ENCODE measurements at regions of chr15 and their contacts with region 1.

Region 1: GRCh38 chr15:71800835-71801745 is 9.3 kb upstream of the NR2E3 start:
- DNase-seq: peak; percentile 78
- H3K4me3 Mint-ChIP-seq: no peak overlapping the region
- H3K27ac Mint-ChIP-seq: peak overlapping the region; percentile 1
- H3K4me1 Mint-ChIP-seq: peaks cover 34% of the 10 kb centered on the region
- H3K27me3 Mint-ChIP-seq: no peaks in the 10 kb centered on the region
- CTCF ChIP-seq: peak; percentile 83

Region 2: GRCh38 chr15:70974004-70974832 is 826.9 kb before region 1 on chr15:
- CTCF ChIA-PET with region 1: no interaction called
- intact Hi-C with region 1: loop called (anchors 2 kb)
- DNase-seq: peak; percentile 3
- H3K4me3 Mint-ChIP-seq: no peak overlapping the region
- H3K27ac Mint-ChIP-seq: no peak overlapping the region
- H3K4me1 Mint-ChIP-seq: no peaks in the 10 kb centered on the region
- H3K27me3 Mint-ChIP-seq: no peaks in the 10 kb centered on the region
- CTCF ChIP-seq: peak; percentile 55

Region 3: DNA sequence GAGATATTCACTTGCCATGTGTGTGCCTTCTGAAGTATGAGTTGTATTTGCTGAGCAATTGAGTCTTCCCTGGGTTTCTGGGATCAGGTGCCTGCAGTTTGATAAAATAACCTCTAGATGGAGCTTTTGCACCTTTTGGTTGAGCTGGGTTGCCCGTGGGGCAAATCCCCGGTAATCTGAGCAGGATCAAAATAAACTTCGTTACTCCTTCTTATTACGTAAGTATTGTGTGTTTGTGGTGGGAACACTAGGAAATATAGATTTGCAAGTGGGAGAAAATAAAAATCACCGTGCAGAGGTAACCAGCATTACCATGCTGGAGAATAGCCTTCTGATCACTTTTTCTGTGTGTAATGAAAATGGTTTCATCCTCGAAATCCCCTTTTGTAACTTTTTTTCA is 268.1 kb before region 1 on chr15:
- CTCF ChIA-PET with region 1: interaction called, 3 read pairs
- intact Hi-C with region 1: loop called (anchors 2 kb)
- DNase-seq: peak; percentile 52
- H3K4me3 Mint-ChIP-seq: no peak overlapping the region
- H3K27ac Mint-ChIP-seq: no peak overlapping the region
- H3K4me1 Mint-ChIP-seq: peaks cover 30% of the 10 kb centered on the region
- H3K27me3 Mint-ChIP-seq: no peaks in the 10 kb centered on the region
- CTCF ChIP-seq: peak; percentile 80

Region 4: DNA sequence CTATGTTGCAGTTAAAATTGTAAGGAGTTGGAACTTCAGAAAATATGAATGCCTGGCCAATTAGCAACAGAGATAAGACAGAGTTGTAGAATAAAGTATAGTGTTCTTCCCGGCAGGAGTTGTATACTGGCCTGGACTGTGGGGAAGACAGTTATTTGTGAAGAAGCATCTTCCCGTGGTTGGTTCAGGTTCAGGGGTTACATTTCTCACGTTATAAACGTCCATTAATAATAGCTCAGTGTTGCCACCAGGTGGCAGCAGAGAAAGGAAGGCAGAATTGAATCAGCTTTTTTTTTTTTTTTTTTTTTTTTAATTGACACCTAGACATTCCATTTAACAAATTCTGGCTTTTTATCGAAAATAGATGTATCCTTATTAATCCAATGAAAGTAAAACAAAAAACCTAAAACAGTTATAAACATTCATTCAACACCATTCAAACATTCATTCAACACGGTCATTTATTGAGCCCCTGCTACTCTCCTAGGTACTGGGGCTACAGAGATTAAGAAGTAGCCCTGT is 57.2 kb before region 1 on chr15:
- CTCF ChIA-PET with region 1: interaction called, 14 read pairs
- intact Hi-C with region 1: loop called (anchors 2 kb)
- DNase-seq: peak; percentile 77
- H3K4me3 Mint-ChIP-seq: no peak overlapping the region
- H3K27ac Mint-ChIP-seq: no peak overlapping the region
- H3K4me1 Mint-ChIP-seq: peaks cover 61% of the 10 kb centered on the region
- H3K27me3 Mint-ChIP-seq: no peaks in the 10 kb centered on the region
- CTCF ChIP-seq: peak; percentile 61

Region 5: GRCh38 chr15:71780115-71780976 is 20.7 kb before region 1 on chr15:
- CTCF ChIA-PET with region 1: interaction called, 11 read pairs
- intact Hi-C with region 1: no loop called
- DNase-seq: peak; percentile 59
- H3K4me3 Mint-ChIP-seq: peak overlapping the region; percentile 7
- H3K27ac Mint-ChIP-seq: peak overlapping the region; percentile 78
- H3K4me1 Mint-ChIP-seq: peaks cover 47% of the 10 kb centered on the region
- H3K27me3 Mint-ChIP-seq: no peaks in the 10 kb centered on the region
- CTCF ChIP-seq: peak; percentile 62

Region 6: DNA sequence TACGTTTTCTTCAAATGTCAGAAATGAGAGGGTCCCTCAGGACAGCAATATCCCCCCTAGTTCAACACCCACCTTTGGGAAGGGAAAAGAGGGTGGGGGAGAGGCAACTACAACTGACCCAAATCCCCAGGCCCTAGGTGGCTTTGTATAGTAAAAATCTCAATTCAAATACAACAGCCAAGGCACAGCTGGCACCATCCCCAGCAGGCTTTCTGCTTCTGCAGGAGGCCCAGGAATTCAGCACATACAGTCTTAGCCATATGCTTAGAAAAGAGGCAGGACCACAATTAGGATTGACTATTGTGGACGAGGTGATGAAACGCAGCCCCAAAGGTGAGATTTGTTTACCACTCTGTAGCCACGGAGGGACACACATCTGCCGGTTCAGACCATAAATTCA is 25.1 kb after region 1 on chr15:
- CTCF ChIA-PET with region 1: no interaction called
- intact Hi-C with region 1: no loop called
- DNase-seq: no peak
- H3K4me3 Mint-ChIP-seq: no peak overlapping the region
- H3K27ac Mint-ChIP-seq: no peak overlapping the region
- H3K4me1 Mint-ChIP-seq: no peaks in the 10 kb centered on the region
- H3K27me3 Mint-ChIP-seq: no peaks in the 10 kb centered on the region
- CTCF ChIP-seq: no peak

Region 7: DNA sequence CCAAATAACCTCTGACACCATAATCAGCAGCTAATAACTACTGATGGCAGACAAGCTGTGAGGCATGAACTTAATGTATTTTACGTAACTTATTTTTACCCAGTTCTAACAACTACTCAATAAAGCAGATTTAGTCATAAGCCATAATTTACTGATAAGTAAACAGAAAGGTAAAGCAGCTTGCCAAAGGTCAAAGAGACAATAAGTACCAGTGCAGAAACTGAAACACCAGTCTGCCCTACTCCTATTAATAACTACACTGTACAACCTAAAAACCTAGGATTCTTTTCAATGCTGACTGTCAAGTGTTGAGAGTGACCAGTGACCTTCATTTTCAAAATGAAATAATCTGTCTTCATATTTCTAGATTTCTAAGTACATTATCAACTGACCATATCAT is 161.4 kb after region 1 on chr15:
- CTCF ChIA-PET with region 1: no interaction called
- intact Hi-C with region 1: no loop called
- DNase-seq: no peak
- H3K4me3 Mint-ChIP-seq: no peak overlapping the region
- H3K27ac Mint-ChIP-seq: peak overlapping the region; percentile 10
- H3K4me1 Mint-ChIP-seq: peaks cover 29% of the 10 kb centered on the region
- H3K27me3 Mint-ChIP-seq: no peaks in the 10 kb centered on the region
- CTCF ChIP-seq: no peak

Measured in Calu3 (cell line).